T-cell (primary cell): ENCODE measurements at regions of chr21 and their contacts with region 1.

Region 1: GRCh38 chr21:17925000-17925610 is 105.9 kb upstream of the C21orf91 start:
- DNase-seq: peak in 28 of 35 experiments; percentile 13 to 77 (median 28)
- ATAC-seq: peak; percentile 73 to 90 (median 86)
- H3K4me3 ChIP-seq: no peak overlapping the region
- H3K4me3 Mint-ChIP-seq: no peak overlapping the region
- H3K27ac ChIP-seq: no peak overlapping the region
- H3K27ac Mint-ChIP-seq: no peak overlapping the region
- H3K4me1 ChIP-seq: no peaks in the 10 kb centered on the region
- H3K4me1 Mint-ChIP-seq: peaks cover 0 to 7% (median 0%) of the 10 kb centered on the region in 3 donors
- H3K27me3 ChIP-seq: no peaks in the 10 kb centered on the region
- H3K27me3 Mint-ChIP-seq: peaks cover 2 to 8% of the 10 kb centered on the region in 2 donors

Region 2: GRCh38 chr21:17679002-17679600 is 246.0 kb before region 1 on chr21:
- CTCF ChIA-PET with region 1: interaction called, 12 to 13 read pairs
- POLR2A ChIA-PET with region 1: no interaction called
- DNase-seq: peak in 9 of 35 experiments; percentile 2 to 81 (median 18)
- ATAC-seq: peak; percentile 84 to 90 (median 87)
- H3K4me3 ChIP-seq: no peak overlapping the region
- H3K4me3 Mint-ChIP-seq: no peak overlapping the region
- H3K27ac ChIP-seq: no peak overlapping the region
- H3K27ac Mint-ChIP-seq: no peak overlapping the region
- H3K4me1 ChIP-seq: no peaks in the 10 kb centered on the region
- H3K4me1 Mint-ChIP-seq: no peaks in the 10 kb centered on the region
- H3K27me3 ChIP-seq: no peaks in the 10 kb centered on the region
- H3K27me3 Mint-ChIP-seq: no peaks in the 10 kb centered on the region

Region 3: DNA sequence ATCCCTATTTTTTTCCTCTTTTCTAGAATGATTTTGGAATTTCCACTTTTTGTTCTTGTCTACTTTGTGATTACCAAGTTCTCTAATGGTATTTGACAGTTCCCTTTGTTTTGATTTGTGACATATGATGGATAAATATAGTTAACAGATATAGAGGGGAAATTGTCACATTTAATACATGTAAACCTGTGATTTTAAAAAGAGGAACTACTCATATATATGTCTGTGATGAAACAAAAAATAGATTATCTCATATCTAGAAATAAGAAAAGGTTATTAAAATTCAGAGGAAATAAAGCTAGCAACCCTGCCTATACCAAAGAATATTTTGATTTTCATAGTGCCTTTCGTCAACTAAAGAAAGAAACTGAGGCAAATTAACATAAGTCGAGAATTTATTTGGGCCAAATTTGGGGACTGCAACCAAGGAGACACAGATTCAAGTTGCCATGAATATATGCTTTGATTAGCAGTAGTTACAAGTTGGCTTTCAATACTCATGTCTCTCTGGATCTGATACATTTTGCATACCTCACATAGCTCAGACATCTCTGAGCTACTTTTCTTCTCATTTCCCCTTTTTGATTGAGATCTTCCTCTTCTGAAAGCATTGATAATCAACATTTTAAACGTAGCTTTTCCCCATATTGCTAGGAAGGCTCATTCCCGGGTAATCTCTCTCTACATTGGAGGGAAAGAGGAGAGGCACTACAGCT is 90.3 kb before region 1 on chr21:
- CTCF ChIA-PET with region 1: no interaction called
- POLR2A ChIA-PET with region 1: no interaction called
- DNase-seq: no peak
- ATAC-seq: no peak
- H3K4me3 ChIP-seq: no peak overlapping the region
- H3K4me3 Mint-ChIP-seq: no peak overlapping the region
- H3K27ac ChIP-seq: no peak overlapping the region
- H3K27ac Mint-ChIP-seq: no peak overlapping the region
- H3K4me1 ChIP-seq: no peaks in the 10 kb centered on the region
- H3K4me1 Mint-ChIP-seq: no peaks in the 10 kb centered on the region
- H3K27me3 ChIP-seq: no peaks in the 10 kb centered on the region
- H3K27me3 Mint-ChIP-seq: peaks cover 0 to 4% of the 10 kb centered on the region in 2 donors

Region 4: GRCh38 chr21:17911628-17912027 is 13.5 kb before region 1 on chr21:
- CTCF ChIA-PET with region 1: interaction called, 8 to 10 read pairs
- POLR2A ChIA-PET with region 1: no interaction called
- DNase-seq: no peak
- ATAC-seq: no peak
- H3K4me3 ChIP-seq: no peak overlapping the region
- H3K4me3 Mint-ChIP-seq: no peak overlapping the region
- H3K27ac ChIP-seq: no peak overlapping the region
- H3K27ac Mint-ChIP-seq: no peak overlapping the region
- H3K4me1 ChIP-seq: no peaks in the 10 kb centered on the region
- H3K4me1 Mint-ChIP-seq: no peaks in the 10 kb centered on the region
- H3K27me3 ChIP-seq: no peaks in the 10 kb centered on the region
- H3K27me3 Mint-ChIP-seq: peaks cover 0 to 14% of the 10 kb centered on the region in 2 donors

Region 5: DNA sequence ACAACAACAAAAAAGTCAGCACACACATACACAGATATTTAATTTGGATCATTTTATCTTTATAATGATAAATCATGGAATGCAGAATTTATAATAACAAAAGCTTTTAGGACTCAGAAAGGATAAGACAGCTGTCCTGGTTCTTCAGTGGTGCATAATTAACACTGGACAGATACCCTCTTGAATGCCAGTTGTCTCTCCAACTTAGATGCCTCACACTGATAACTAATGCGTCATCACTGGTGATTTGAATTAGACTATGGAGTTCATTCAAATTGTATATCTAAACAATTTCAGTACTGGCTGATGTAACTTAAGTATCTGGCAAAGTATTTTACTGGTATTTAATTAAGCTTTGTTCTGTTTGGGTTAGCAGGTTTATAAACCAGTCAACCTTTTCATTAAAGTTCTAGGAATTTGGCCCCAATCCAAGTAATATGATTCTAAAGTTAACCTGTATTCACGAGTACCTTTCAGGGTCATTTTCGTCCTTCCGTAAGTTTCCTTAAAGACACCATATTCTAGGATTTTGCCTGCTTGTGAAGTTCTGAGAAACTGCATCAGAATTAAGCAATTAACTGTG is 1678.0 kb after region 1 on chr21:
- CTCF ChIA-PET with region 1: no interaction called
- POLR2A ChIA-PET with region 1: no interaction called
- DNase-seq: no peak
- ATAC-seq: no peak
- H3K4me3 ChIP-seq: no peak overlapping the region
- H3K4me3 Mint-ChIP-seq: no peak overlapping the region
- H3K27ac ChIP-seq: no peak overlapping the region
- H3K27ac Mint-ChIP-seq: no peak overlapping the region
- H3K4me1 ChIP-seq: no peaks in the 10 kb centered on the region
- H3K4me1 Mint-ChIP-seq: no peaks in the 10 kb centered on the region
- H3K27me3 ChIP-seq: no peaks in the 10 kb centered on the region
- H3K27me3 Mint-ChIP-seq: no peaks in the 10 kb centered on the region